ENCODE measurements at regions of chr15 and their contacts with region 1.

Region 1: DNA sequence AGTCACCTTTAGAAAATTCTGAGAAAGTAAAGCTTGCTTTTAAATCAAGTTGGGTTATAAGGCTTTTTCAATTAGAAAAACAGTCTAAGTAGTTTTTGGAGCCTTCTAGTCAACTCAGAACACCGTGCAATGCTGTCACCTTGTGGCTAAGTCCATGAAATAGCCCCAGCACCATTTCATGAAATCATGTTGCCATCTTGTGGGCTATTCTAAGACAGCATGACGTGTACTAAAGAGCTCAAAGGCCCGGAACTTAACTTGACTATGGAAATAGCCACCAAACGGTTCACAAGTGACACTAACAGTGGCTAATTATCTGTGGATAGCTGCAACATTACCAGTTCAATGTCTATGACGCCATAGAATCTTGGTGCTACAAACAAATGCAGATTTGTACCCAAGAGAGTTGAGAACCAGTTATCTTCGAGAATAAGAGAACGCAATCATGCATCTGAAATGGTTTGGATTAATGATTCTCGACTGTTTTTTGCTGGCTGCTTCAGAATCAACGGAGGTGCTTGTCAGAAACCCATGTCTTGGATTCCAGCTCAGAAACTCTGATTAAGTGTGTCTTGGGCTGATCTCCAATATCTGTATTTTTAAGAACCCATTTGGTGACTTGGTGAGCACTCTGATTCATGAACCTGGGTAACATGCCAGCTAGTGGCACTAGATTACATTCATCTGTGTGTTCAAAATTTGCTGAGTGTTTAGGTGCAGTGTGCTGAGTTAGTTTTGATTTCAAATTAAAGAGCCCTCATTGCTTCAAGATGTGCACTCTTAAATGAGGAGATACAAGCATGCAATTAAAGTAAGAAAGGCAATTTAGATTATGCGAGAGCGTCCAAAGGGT is 111.2 kb upstream of the MCTP2 start:
- H3K4me3 ChIP-seq: no peak overlapping the region
- H3K27ac ChIP-seq: no peak overlapping the region
- H3K4me1 ChIP-seq: peaks cover 9% of the 10 kb centered on the region
- CTCF ChIP-seq: peak; percentile 91

Region 2: DNA sequence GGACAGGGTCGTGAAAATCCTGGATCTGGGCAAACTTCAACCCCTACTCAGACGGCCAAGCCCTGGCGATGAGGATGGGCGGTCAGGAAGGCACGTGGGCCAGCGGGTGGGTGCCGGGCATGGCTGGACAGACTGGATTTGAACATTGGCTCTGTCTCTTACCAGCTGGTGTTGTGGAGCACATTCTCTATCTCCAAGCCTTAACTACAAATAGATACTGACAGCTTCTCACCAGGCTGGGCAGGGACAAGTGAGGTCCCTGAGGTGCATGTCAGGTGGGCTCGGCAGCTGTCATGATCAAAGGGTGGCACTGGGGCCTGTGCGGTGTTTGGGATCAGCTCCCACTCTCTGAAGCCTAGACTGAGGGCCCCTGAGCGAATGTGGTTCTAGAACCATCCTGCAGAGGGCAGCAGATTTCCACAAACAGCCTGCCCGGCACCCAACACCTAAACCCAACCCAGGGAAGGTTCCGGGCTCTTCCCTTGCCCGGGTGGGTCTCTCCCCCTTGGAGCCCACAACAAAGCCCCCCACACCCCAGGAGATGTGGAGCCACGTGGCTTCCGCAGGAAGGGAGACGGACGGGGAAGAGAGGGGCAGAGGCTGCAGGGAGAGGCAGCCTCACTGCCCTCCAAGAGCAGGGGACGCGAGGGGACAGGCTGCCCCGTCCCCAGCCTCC is 1089.6 kb before region 1 on chr15:
- CTCF ChIA-PET with region 1: interaction called, 147 read pairs
- POLR2A ChIA-PET with region 1: interaction called, 4 read pairs
- H3K4me3 ChIP-seq: no peak overlapping the region
- H3K27ac ChIP-seq: no peak overlapping the region
- H3K4me1 ChIP-seq: no peaks in the 10 kb centered on the region
- CTCF ChIP-seq: peak; percentile 88

Region 3: DNA sequence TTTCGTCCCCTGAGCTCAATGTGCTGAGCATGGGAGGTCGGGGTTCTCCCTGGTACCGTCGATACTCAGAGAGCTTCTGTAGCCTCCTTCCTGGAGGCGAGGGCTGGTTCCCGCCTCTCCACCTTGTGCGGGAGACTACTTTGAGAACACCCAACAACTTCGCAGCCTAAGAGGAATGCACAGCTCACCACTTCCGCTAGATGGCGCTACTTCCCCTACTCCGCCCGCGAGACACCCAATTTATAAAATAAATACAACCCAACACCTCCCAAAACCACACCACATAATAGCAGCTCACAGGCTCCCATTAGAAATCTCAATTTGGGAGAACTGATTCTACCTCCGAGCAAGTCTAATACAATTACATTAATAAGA is 1032.3 kb before region 1 on chr15:
- CTCF ChIA-PET with region 1: interaction called, 20 read pairs
- POLR2A ChIA-PET with region 1: no interaction called
- H3K4me3 ChIP-seq: peak overlapping the region; percentile 50
- H3K27ac ChIP-seq: peak overlapping the region; percentile 72; the same call in 1 of the 2 replicates
- H3K4me1 ChIP-seq: no peaks in the 10 kb centered on the region; the same call in 1 of the 2 replicates
- CTCF ChIP-seq: peak; percentile 79

Region 4: DNA sequence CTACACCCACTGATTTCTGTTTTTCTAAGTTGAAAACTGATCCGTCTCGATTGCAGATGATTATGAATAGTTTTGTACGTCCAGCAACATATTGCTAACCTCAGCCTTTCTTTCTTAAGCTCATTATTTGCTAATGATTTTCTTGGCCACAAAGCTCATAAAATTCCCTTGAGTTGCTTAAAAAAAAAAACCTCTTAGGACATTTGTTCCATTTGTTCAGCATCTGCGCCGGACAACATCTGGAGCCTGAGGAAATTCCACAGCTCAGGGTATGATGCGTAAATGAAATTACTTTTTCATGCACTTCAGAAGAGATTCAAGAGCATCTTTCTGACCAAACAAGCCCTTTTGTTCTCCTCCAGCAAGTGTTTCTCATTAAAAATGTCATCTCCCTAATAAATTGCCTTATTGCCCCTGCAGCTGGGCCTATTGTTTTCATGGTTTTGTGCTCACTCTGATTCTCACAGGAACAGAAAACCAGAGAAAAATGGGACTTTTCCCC is 137.9 kb before region 1 on chr15:
- CTCF ChIA-PET with region 1: interaction called, 54 read pairs
- POLR2A ChIA-PET with region 1: no interaction called
- H3K4me3 ChIP-seq: no peak overlapping the region
- H3K27ac ChIP-seq: no peak overlapping the region
- H3K4me1 ChIP-seq: peaks cover 16% of the 10 kb centered on the region
- CTCF ChIP-seq: no peak

Region 5: GRCh38 chr15:94004697-94005096 is 115.5 kb before region 1 on chr15:
- CTCF ChIA-PET with region 1: interaction called, 62 read pairs
- POLR2A ChIA-PET with region 1: no interaction called
- H3K4me3 ChIP-seq: no peak overlapping the region
- H3K27ac ChIP-seq: no peak overlapping the region
- H3K4me1 ChIP-seq: no peaks in the 10 kb centered on the region
- CTCF ChIP-seq: no peak

Region 6: GRCh38 chr15:94070356-94071295 is 49.5 kb before region 1 on chr15:
- CTCF ChIA-PET with region 1: interaction called, 20 read pairs
- POLR2A ChIA-PET with region 1: no interaction called
- H3K4me3 ChIP-seq: no peak overlapping the region; the same call in 1 of the 2 replicates
- H3K27ac ChIP-seq: peak overlapping the region; percentile 32; the same call in 1 of the 2 replicates
- H3K4me1 ChIP-seq: peaks cover 18% of the 10 kb centered on the region
- CTCF ChIP-seq: no peak

Region 7: DNA sequence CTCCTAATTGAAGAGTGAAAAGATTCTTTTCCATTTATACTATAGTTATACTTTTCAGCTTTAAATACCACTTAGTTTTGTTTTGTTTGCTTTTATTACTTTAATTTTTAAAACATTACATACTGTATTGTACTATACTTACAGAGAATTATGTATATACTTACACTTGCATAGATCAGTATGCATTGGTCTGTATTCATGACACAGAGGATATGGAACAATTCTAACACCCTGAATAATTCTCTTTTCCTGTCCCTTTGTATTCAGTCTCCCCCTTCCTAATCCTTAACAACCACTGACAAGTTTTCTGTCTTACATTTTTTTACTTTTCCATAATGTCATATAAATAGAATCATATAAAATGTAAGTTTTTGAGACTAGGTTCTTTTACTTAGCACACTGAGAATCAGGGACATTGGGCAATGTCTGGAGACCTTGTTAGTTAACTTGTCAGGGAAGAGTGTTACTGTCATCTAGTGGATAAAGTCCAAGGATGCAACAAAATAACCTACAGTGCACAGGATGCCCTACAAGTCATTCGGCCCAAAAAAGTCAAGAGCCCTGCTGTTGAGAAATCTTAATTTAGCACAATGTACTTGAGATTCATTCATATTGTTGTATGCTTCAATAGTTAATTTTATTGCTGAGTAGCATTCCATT is 15.5 kb after region 1 on chr15:
- CTCF ChIA-PET with region 1: interaction called, 18 read pairs
- POLR2A ChIA-PET with region 1: no interaction called
- H3K4me3 ChIP-seq: no peak overlapping the region
- H3K27ac ChIP-seq: no peak overlapping the region
- H3K4me1 ChIP-seq: no peaks in the 10 kb centered on the region
- CTCF ChIP-seq: no peak

Region 8: DNA sequence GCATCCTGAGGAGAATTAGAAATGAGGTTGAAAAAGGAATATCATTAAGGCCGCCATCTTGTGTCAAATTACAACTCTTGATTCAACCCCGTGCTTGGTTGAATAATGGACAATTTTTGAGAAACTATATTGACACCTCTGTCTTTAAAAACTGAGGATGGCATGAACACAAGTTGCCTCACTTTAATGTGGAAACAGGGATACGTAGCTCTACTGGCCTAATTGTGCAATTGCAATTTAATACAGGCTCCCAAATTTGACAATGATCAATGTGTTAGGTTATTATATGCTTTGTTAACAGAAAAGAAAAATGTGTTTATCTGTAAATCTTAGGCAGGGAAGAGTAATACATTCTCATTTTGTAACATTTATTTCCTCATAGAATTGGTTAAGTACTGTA is 34.1 kb after region 1 on chr15:
- CTCF ChIA-PET with region 1: no interaction called
- POLR2A ChIA-PET with region 1: no interaction called
- H3K4me3 ChIP-seq: no peak overlapping the region
- H3K27ac ChIP-seq: no peak overlapping the region
- H3K4me1 ChIP-seq: no peaks in the 10 kb centered on the region
- CTCF ChIP-seq: no peak

Region 9: GRCh38 chr15:94414916-94415315 is 294.8 kb after region 1 on chr15:
- CTCF ChIA-PET with region 1: no interaction called
- POLR2A ChIA-PET with region 1: no interaction called
- H3K4me3 ChIP-seq: no peak overlapping the region
- H3K27ac ChIP-seq: no peak overlapping the region
- H3K4me1 ChIP-seq: peaks cover 56% of the 10 kb centered on the region
- CTCF ChIP-seq: no peak

Measured in HEK293 (cell line).